ENCODE measurements at regions of chrX and their contacts with region 1.

Region 1: GRCh38 chrX:31546130-31546529 is 474.3 kb upstream of the FTHL17 start:
- DNase-seq: no peak
- H3K4me3 ChIP-seq: no peak overlapping the region
- H3K4me3 Mint-ChIP-seq: no peak overlapping the region
- H3K27ac Mint-ChIP-seq: no peak overlapping the region
- H3K4me1 ChIP-seq: peaks cover 4% of the 10 kb centered on the region; the same call in 1 of the 2 replicates
- H3K4me1 Mint-ChIP-seq: no peaks in the 10 kb centered on the region
- H3K27me3 ChIP-seq: no peaks in the 10 kb centered on the region
- H3K27me3 Mint-ChIP-seq: no peaks in the 10 kb centered on the region
- CTCF ChIP-seq: no peak

Region 2: GRCh38 chrX:30930679-30931078 is 615.5 kb before region 1 on chrX:
- CTCF ChIA-PET with region 1: no interaction called
- POLR2A ChIA-PET with region 1: no interaction called
- intact Hi-C with region 1: no loop called
- DNase-seq: no peak
- H3K4me3 ChIP-seq: no peak overlapping the region
- H3K4me3 Mint-ChIP-seq: no peak overlapping the region
- H3K27ac Mint-ChIP-seq: no peak overlapping the region
- H3K4me1 ChIP-seq: peaks cover 26% of the 10 kb centered on the region
- H3K4me1 Mint-ChIP-seq: peaks cover 17% of the 10 kb centered on the region
- H3K27me3 ChIP-seq: no peaks in the 10 kb centered on the region
- H3K27me3 Mint-ChIP-seq: no peaks in the 10 kb centered on the region
- CTCF ChIP-seq: no peak

Region 3: GRCh38 chrX:31279359-31279758 is 266.8 kb before region 1 on chrX:
- CTCF ChIA-PET with region 1: no interaction called
- POLR2A ChIA-PET with region 1: no interaction called
- intact Hi-C with region 1: loop called (anchors 10 kb)
- DNase-seq: peak; percentile 20 to 32
- H3K4me3 ChIP-seq: no peak overlapping the region
- H3K4me3 Mint-ChIP-seq: no peak overlapping the region
- H3K27ac Mint-ChIP-seq: no peak overlapping the region
- H3K4me1 ChIP-seq: no peaks in the 10 kb centered on the region
- H3K4me1 Mint-ChIP-seq: peaks cover 8% of the 10 kb centered on the region
- H3K27me3 ChIP-seq: no peaks in the 10 kb centered on the region
- H3K27me3 Mint-ChIP-seq: no peaks in the 10 kb centered on the region
- CTCF ChIP-seq: peak; percentile 24 to 31

Region 4: DNA sequence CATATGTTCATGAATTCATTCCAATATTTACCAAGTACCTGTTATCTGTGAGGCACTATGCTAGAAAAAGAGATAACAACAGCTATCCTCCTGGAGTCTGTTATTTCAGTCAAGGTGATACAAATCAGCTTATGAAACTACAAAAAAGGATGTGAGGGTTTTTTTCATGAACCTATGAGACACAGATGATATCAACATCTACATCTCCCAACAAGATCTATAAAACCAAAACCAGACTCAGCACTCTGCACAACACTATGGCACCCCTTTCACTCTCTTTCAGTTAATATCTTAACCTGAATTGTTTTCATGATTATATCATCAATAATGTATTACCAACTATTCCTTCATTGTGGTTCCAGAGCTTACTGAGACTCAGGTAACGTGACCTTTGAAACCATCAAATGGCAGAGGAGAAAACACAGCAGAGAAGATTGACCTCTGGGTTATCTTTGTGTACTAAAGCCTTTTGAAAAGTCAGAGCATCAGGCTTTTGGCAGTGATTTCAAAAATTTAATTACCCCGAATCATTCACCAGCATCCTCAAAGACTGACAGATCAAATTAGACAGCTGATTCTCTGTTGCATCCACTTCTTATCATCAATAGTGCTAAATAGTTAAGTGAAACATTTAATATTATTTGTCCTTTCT is 229.7 kb before region 1 on chrX:
- CTCF ChIA-PET with region 1: no interaction called
- POLR2A ChIA-PET with region 1: no interaction called
- intact Hi-C with region 1: loop called (anchors 1 kb)
- DNase-seq: peak; percentile 26 to 28
- H3K4me3 ChIP-seq: no peak overlapping the region
- H3K4me3 Mint-ChIP-seq: no peak overlapping the region
- H3K27ac Mint-ChIP-seq: no peak overlapping the region
- H3K4me1 ChIP-seq: peaks cover 10% of the 10 kb centered on the region
- H3K4me1 Mint-ChIP-seq: peaks cover 10% of the 10 kb centered on the region
- H3K27me3 ChIP-seq: no peaks in the 10 kb centered on the region
- H3K27me3 Mint-ChIP-seq: no peaks in the 10 kb centered on the region
- CTCF ChIP-seq: no peak

Region 5: GRCh38 chrX:31435592-31435991 is 110.5 kb before region 1 on chrX:
- CTCF ChIA-PET with region 1: no interaction called
- POLR2A ChIA-PET with region 1: no interaction called
- intact Hi-C with region 1: loop called (anchors 5 kb)
- DNase-seq: peak; percentile 67 to 81
- H3K4me3 ChIP-seq: no peak overlapping the region
- H3K4me3 Mint-ChIP-seq: peak overlapping the region; percentile 67
- H3K27ac Mint-ChIP-seq: peak overlapping the region; percentile 64
- H3K4me1 ChIP-seq: 0 out of 2 replicates have a peak, but pooled peaks cover 10% of the 10 kb centered on the region
- H3K4me1 Mint-ChIP-seq: peaks cover 14% of the 10 kb centered on the region
- H3K27me3 ChIP-seq: no peaks in the 10 kb centered on the region
- H3K27me3 Mint-ChIP-seq: no peaks in the 10 kb centered on the region
- CTCF ChIP-seq: no peak

Region 6: DNA sequence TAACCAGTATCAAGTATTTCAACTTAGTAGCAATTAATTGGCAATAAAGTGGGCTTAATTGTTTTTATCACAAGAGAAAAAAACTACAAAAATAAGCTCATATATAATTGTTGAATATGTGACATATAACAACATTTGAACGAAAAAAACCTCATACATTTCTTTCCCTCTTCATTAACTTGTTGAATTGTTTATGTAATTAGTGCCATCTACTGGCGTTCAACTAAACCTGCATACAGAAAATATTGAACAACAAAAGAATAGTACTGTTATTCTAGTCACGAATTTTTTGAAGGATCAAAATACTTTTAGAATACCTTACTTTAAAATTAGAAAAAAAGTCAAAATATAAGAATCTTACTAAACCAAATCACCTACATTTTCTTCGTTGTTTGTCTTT is 112.2 kb after region 1 on chrX:
- CTCF ChIA-PET with region 1: no interaction called
- POLR2A ChIA-PET with region 1: no interaction called
- intact Hi-C with region 1: loop called (anchors 10 kb)
- DNase-seq: no peak
- H3K4me3 ChIP-seq: no peak overlapping the region
- H3K4me3 Mint-ChIP-seq: no peak overlapping the region
- H3K27ac Mint-ChIP-seq: no peak overlapping the region
- H3K4me1 ChIP-seq: no peaks in the 10 kb centered on the region
- H3K4me1 Mint-ChIP-seq: no peaks in the 10 kb centered on the region
- H3K27me3 ChIP-seq: no peaks in the 10 kb centered on the region
- H3K27me3 Mint-ChIP-seq: no peaks in the 10 kb centered on the region
- CTCF ChIP-seq: peak; percentile 28 to 40

Region 7: DNA sequence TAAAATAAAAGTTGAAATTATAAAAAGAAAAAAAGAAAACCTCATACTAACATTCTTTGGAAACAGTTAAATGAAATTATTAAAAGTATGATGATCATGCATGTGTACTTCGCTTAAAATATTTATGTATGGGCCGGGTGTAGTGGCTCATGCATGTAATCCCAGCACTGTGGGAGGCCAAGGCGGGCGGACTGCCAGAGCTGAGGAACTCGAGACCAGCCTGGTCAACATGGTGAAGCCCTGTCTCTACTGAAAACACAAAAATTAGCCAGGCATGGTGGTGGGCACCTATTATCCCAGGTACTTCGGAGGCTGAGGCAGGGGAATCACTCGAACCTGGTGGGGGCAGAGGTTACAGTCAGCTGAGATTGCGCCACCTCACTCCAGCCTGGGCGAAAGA is 477.9 kb after region 1 on chrX:
- CTCF ChIA-PET with region 1: no interaction called
- POLR2A ChIA-PET with region 1: no interaction called
- intact Hi-C with region 1: no loop called
- DNase-seq: no peak
- H3K4me3 ChIP-seq: no peak overlapping the region
- H3K4me3 Mint-ChIP-seq: no peak overlapping the region
- H3K27ac Mint-ChIP-seq: no peak overlapping the region
- H3K4me1 ChIP-seq: no peaks in the 10 kb centered on the region
- H3K4me1 Mint-ChIP-seq: no peaks in the 10 kb centered on the region
- H3K27me3 ChIP-seq: no peaks in the 10 kb centered on the region
- H3K27me3 Mint-ChIP-seq: no peaks in the 10 kb centered on the region
- CTCF ChIP-seq: no peak

Measured in Caco-2 (cell line).